Calu3 (cell line): ENCODE measurements at regions of chr6 and their contacts with region 1.

Region 1: GRCh38 chr6:88780714-88781389 is 182.6 kb downstream of the RNGTT start:
- DNase-seq: peak; percentile 58
- H3K4me3 Mint-ChIP-seq: no peak overlapping the region
- H3K27ac Mint-ChIP-seq: no peak overlapping the region
- H3K4me1 Mint-ChIP-seq: no peaks in the 10 kb centered on the region
- H3K27me3 Mint-ChIP-seq: no peaks in the 10 kb centered on the region
- CTCF ChIP-seq: peak; percentile 63

Region 2: DNA sequence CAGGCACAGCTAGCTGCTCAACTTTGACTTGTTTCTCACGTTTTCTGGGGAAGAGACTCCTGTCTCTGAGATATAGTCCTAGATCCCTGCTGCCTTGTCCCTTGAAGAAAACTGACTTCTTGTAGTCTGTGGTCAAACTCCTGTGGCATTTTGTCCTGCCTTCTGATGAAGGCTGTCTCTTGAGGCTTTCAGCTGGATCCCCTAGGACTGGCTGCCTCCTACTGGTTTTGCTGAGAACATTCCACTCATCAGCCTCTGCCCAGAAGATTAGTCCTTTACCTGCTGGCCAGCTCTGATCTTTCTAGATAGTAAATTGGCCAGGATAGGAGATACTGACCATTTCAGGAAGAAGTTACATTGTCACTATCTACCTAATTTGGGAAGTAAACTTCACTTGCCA is 542.8 kb before region 1 on chr6:
- CTCF ChIA-PET with region 1: no interaction called
- intact Hi-C with region 1: loop called (anchors 10 kb)
- DNase-seq: peak; percentile 38
- H3K4me3 Mint-ChIP-seq: no peak overlapping the region
- H3K27ac Mint-ChIP-seq: no peak overlapping the region
- H3K4me1 Mint-ChIP-seq: no peaks in the 10 kb centered on the region
- H3K27me3 Mint-ChIP-seq: no peaks in the 10 kb centered on the region
- CTCF ChIP-seq: no peak